Panc1 (cell line): ENCODE measurements at regions of chr12 and their contacts with region 1.

Region 1: DNA sequence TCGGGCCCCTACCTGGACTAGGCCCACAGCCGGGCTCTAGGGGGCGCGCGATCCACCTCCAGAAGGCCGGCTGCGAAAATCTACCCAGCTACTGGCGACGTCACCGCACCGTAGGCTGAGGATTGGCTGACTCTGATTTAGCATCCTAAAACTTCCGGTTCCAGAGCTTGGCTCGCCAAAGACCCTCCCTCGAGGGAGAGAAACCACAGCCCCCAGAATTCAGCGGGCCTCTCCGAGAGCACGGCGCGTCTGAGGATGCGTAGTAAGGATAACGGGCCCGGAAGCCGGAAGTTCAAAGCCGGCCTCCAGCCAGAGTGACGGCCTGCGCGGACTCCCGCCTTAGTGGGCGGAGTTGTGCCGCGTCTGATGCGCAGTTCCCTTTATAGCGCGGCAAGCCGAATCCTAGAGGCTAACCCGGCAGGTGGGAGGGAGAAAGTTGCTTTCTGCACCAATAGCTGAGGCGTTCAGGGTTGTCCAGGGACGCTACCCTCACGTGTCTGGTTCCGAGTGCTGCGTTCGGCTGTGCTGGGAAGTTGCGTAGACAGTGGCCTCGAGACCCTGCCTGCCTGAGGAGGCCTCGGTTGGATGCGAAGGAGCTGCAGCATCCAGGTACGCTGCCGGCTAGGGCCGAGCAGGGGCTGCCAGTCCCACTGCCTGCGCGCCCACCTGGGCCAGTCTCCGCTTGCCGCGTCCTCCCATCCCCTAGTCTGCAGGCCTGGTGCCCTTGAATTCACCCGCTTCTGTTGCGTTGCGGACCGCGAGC is at the start of gene COX14:
- DNase-seq: peak; percentile 99
- ATAC-seq: peak; percentile 94
- H3K4me3 ChIP-seq: peak within 1 kb of the TSS; percentile 64 to 99
- H3K27ac ChIP-seq: peak within 1 kb of the TSS; percentile 71
- H3K4me1 ChIP-seq: peaks cover 15% of the 10 kb centered on the region
- H3K27me3 ChIP-seq: no peaks in the 10 kb centered on the region
- CTCF ChIP-seq: peak; percentile 99
- total RNA-seq, gene COX14: 74.5 TPM

Region 2: DNA sequence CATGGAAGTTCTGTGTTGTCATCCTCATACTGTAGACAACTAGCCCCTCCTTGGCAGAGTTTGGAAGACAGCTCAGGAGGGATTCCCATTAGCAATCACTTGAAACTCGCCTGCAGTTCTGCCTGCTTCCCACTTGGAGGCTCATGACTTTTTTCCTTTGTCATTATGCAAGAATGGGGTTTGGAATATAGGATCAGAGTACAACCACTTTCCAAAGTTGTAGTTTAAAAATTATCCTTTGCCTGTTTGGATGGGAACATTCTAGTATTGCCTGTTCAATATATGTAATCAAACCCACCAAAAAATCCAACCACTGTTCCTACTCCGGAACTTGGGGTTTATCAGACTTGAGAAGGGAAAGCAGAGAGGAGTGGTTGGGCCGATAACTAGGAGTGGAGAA is 10.2 kb before region 1 on chr12:
- CTCF ChIA-PET with region 1: interaction called, 12 read pairs
- POLR2A ChIA-PET with region 1: no interaction called
- in situ Hi-C with region 1: no loop called
- intact Hi-C with region 1: no loop called
- DNase-seq: no peak
- ATAC-seq: peak; percentile 36; the same call in 1 of the 2 replicates
- H3K4me3 ChIP-seq: no peak overlapping the region
- H3K27ac ChIP-seq: no peak overlapping the region
- H3K4me1 ChIP-seq: peaks cover 7% of the 10 kb centered on the region; the same call in 1 of the 2 replicates
- H3K27me3 ChIP-seq: no peaks in the 10 kb centered on the region
- CTCF ChIP-seq: peak; percentile 64

Region 3: GRCh38 chr12:50167041-50167828 is 55.4 kb after region 1 on chr12 and contains the start of gene CERS5:
- CTCF ChIA-PET with region 1: interaction called, 12 read pairs
- POLR2A ChIA-PET with region 1: interaction called, 6 read pairs
- in situ Hi-C with region 1: no loop called
- intact Hi-C with region 1: loop called (anchors 5 kb)
- DNase-seq: peak; percentile 92
- ATAC-seq: peak; percentile 99
- H3K4me3 ChIP-seq: peak within 1 kb of the TSS; percentile 60 to 81
- H3K27ac ChIP-seq: peak within 1 kb of the TSS; percentile 86
- H3K4me1 ChIP-seq: peaks cover 8% of the 10 kb centered on the region
- H3K27me3 ChIP-seq: no peaks in the 10 kb centered on the region
- CTCF ChIP-seq: no peak
- total RNA-seq, gene CERS5: 50.5 TPM

Region 4: GRCh38 chr12:50257686-50258551 is 146.0 kb after region 1 on chr12:
- CTCF ChIA-PET with region 1: no interaction called
- POLR2A ChIA-PET with region 1: no interaction called
- in situ Hi-C with region 1: no loop called
- intact Hi-C with region 1: no loop called
- DNase-seq: no peak
- ATAC-seq: peak; percentile 67
- H3K4me3 ChIP-seq: no peak overlapping the region
- H3K27ac ChIP-seq: peak overlapping the region; percentile 73
- H3K4me1 ChIP-seq: peaks cover 85% of the 10 kb centered on the region
- H3K27me3 ChIP-seq: no peaks in the 10 kb centered on the region
- CTCF ChIP-seq: no peak